BJ (cell line): ENCODE measurements at regions of chr1 and their contacts with region 1.

Region 1: DNA sequence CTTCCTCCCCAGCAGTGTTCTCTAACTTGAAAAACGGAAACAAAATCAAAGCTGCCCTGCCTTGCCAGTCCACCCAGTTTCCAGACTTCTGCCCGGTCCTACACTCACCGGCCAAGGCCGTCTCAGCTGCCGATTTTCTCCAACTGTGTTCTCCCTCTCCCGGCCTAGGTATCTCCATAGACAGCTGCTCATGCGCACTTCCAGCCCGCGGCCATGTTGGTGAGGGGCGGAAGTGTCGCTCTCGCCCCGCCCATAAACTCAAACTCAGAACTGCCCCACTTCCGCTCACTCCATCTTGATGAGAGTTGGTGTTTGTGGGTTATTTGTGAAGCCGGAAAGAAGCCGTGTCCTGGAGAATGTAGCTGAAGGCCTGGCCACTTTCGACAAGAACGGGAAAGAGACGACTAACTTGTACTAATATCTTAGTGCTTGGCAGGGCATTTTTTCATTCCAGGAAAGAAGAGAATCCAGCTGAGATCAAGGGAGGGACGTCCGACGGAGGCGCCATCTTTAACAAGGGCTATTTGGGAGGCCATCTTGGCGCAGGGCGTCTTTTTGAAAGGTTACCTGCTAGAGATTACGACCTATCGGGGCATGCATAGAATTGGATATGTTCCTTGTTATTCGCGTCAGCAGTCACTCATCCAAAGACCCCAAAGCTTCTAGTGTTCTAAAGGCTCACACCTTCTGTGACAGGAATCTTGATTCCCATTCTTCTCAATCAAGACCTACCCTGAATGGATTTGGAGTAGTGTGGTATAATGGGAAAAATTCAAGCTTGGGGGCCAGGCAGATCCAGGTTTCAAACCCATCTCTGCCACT is at the start of gene USF1:
- DNase-seq: peak; percentile 74
- H3K4me3 ChIP-seq: peak within 1 kb of the TSS; percentile 70
- H3K27me3 ChIP-seq: no peaks in the 10 kb centered on the region
- CTCF ChIP-seq: no peak
- polyA plus RNA-seq, gene USF1: 33.0 and 40.4 TPM in 2 replicates

Region 2: GRCh38 chr1:160862203-160863060 is 183.5 kb before region 1 on chr1 and contains the start of gene CD244:
- CTCF ChIA-PET with region 1: no interaction called
- POLR2A ChIA-PET with region 1: no interaction called
- DNase-seq: no peak
- H3K4me3 ChIP-seq: no peak within 1 kb of the TSS
- H3K27me3 ChIP-seq: no peaks in the 10 kb centered on the region
- CTCF ChIP-seq: no peak
- polyA plus RNA-seq, gene CD244: not detected in 2 replicates

Region 3: GRCh38 chr1:160907976-160908375 is 138.0 kb before region 1 on chr1:
- CTCF ChIA-PET with region 1: no interaction called
- POLR2A ChIA-PET with region 1: no interaction called
- DNase-seq: no peak
- H3K4me3 ChIP-seq: no peak overlapping the region
- H3K27me3 ChIP-seq: no peaks in the 10 kb centered on the region; the same call in 1 of the 2 replicates
- CTCF ChIP-seq: no peak

Region 4: DNA sequence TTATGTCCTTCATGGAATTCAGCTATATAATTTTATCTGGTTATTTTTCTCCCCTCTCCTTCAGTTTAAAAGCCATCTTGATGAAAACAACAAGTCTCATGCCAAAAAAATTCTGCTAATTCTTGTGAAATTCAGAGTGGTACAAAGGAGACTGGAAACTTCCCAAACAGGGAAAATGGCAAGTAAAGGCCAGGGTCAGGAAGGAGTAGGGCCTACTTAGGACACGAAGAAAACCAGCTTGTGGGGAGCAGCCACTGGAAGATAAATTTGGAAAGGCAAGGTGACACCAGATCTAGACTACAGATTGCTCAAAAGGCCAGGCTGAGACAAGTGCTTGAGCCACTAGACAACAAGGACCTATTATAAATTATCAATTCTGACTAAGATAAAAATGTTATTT is 13.6 kb before region 1 on chr1:
- CTCF ChIA-PET with region 1: interaction called, 13 read pairs
- POLR2A ChIA-PET with region 1: interaction called, 5 read pairs
- DNase-seq: no peak
- H3K4me3 ChIP-seq: no peak overlapping the region
- H3K27me3 ChIP-seq: no peaks in the 10 kb centered on the region
- CTCF ChIP-seq: no peak